MCF 10A (cell line): ENCODE measurements at regions of chr15 and their contacts with region 1.

Region 1: GRCh38 chr15:73964736-73965093 is 27.4 kb downstream of the STOML1 start:
- DNase-seq: peak; percentile 85
- H3K4me3 Mint-ChIP-seq: no peak overlapping the region
- H3K27ac Mint-ChIP-seq: no peak overlapping the region
- H3K4me1 Mint-ChIP-seq: no peaks in the 10 kb centered on the region
- H3K27me3 Mint-ChIP-seq: no peaks in the 10 kb centered on the region
- CTCF ChIP-seq: peak; percentile 86

Region 2: DNA sequence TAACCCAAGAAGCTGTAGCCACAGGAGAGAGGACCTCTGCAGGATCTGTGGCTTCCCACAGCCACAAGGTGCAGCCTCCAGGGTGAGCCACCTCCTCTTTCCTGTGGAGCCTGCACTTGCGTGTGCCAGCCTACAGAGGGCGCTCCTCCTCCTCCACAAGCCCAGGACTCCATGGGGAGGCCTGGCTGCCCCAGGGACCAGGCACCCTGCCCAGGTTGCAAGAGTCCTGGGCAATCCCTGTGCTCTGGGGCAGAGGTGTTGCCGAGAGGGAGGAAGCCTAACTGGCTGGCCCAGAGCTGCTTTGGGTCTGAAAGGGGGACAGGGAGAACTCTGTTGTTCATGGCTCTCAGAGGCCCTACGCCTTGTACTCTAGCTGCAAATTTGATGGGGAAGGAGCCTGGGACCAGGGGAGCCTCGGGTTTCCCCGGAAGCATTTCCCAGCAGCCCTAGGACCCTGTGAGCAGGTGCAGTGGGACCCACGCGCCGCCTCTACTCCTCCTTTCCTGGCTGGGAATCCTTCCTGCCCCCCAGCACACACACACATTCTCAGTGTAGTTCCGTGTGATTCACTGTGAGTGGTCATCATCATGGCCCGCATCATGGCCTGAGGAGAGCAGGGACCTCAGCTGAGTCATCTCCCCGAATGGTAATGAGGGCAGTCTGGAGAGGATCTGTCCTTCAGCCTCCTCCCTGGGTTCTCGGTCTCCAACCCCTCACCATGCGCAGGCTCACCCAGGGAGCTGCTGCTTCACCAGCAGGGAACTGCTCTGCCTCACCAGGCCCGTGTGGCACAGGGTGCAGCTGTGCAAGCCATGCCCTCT is 67.1 kb before region 1 on chr15:
- CTCF ChIA-PET with region 1: interaction called, 3 read pairs
- POLR2A ChIA-PET with region 1: no interaction called
- intact Hi-C with region 1: loop called (anchors 1 kb)
- DNase-seq: peak; percentile 80
- H3K4me3 Mint-ChIP-seq: no peak overlapping the region
- H3K27ac Mint-ChIP-seq: no peak overlapping the region
- H3K4me1 Mint-ChIP-seq: no peaks in the 10 kb centered on the region
- H3K27me3 Mint-ChIP-seq: no peaks in the 10 kb centered on the region
- CTCF ChIP-seq: peak; percentile 88

Region 3: GRCh38 chr15:73950831-73951561 is 13.7 kb before region 1 on chr15:
- CTCF ChIA-PET with region 1: interaction called, 9 read pairs
- POLR2A ChIA-PET with region 1: no interaction called
- intact Hi-C with region 1: loop called (anchors 1 kb)
- DNase-seq: peak; percentile 78
- H3K4me3 Mint-ChIP-seq: no peak overlapping the region
- H3K27ac Mint-ChIP-seq: no peak overlapping the region
- H3K4me1 Mint-ChIP-seq: peaks cover 6% of the 10 kb centered on the region
- H3K27me3 Mint-ChIP-seq: no peaks in the 10 kb centered on the region
- CTCF ChIP-seq: peak; percentile 36